RWPE1 (cell line): ENCODE measurements at regions of chr1 and their contacts with region 1.

Region 1: GRCh38 chr1:9052272-9053049 is 17.0 kb downstream of the SLC2A5 start:
- DNase-seq: no peak
- H3K27ac ChIP-seq: no peak overlapping the region
- CTCF ChIP-seq: no peak

Region 2: DNA sequence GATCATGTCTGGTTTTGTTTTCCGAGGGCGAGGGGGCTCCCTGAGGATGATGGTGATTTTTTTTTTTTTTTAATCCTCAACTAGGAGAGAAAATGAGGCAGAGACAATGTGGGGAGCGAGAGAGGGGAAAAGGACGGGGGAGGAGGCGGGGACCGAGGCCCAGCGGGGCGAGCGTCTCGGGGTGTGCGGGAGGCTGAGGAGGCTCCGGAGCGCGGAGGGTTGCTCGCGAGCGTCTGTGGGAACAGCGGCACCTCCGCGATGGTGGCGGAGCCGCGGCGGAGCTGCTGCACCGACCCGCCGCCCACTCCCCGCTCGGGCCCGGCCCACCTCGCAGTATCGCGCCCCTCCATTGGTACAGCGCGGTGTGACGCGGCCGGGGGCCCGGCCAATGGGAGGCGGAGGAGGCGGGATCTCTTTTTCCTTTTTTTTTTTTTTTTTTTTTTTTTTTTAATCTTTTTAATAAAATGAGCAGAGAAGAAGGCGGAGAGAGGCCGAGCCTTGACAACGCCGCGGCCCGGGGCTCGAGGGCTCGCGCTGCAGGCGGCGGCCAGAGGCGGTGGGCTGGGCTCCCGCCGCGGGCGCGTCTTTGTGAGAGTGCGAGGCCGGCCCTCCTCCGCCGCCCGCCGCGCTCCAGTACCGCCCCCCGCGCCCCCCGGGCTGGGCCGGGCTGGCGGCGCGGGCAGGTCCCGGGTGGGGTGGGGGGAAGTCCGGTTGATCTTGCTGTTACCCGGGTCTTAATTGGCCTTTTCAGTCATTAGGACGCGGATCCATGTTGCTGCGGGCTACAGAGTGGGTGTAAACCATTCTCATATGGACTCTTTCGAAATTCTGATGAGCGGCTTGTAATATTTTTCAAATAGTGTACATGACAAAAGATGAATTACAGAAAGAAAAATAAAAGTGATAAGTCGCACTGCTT is 234.8 kb before region 1 on chr1 and contains the start of gene RERE:
- CTCF ChIA-PET with region 1: interaction called, 10 read pairs
- POLR2A ChIA-PET with region 1: no interaction called
- DNase-seq: peak; percentile 100
- H3K27ac ChIP-seq: peak within 1 kb of the TSS; percentile 99
- CTCF ChIP-seq: no peak

Region 3: GRCh38 chr1:9161963-9162362 is 109.5 kb after region 1 on chr1:
- CTCF ChIA-PET with region 1: no interaction called
- POLR2A ChIA-PET with region 1: no interaction called
- DNase-seq: no peak
- H3K27ac ChIP-seq: no peak overlapping the region; the same call in 1 of the 2 replicates
- CTCF ChIP-seq: no peak